ENCODE measurements at regions of chr10 and their contacts with region 1.

Region 1: DNA sequence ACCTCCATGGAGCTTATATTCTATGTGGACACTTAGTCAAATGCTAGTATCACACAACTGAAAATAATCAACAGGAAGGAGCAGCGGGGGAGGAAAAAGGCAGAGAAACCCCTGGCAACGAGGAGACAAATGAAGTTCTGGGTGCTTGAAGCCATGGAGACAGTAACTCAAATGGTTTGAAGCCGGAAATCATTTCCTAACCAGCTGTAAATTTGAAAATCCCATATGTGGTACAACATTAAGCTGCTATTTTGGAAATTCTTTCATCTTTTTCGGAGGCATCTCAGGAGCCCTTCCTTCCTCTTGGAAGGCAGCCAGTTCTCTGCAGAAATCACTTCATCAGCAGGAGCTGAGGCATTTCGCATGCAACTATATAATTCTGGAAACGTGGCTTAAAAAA is 91.4 kb downstream of the PPP1R3C start:
- DNase-seq: no peak
- ATAC-seq: no peak
- H3K4me3 ChIP-seq: no peak overlapping the region
- H3K27ac ChIP-seq: no peak overlapping the region
- H3K4me1 ChIP-seq: no peaks in the 10 kb centered on the region
- H3K27me3 ChIP-seq: no peaks in the 10 kb centered on the region; a peak in 1 of 5 replicates
- CTCF ChIP-seq: no peak
- EP300 ChIP-seq: no peak
- POLR2A ChIP-seq: no peak
- RAD21 ChIP-seq: no peak

Region 2: GRCh38 chr10:91006001-91006751 is 535.3 kb before region 1 on chr10:
- CTCF ChIA-PET with region 1: no interaction called
- POLR2A ChIA-PET with region 1: no interaction called
- in situ Hi-C with region 1: no loop called
- intact Hi-C with region 1: loop called (anchors 10 kb)
- DNase-seq: peak; percentile 41 to 66 (median 45)
- ATAC-seq: peak; percentile 78
- H3K4me3 ChIP-seq: no peak overlapping the region
- H3K27ac ChIP-seq: no peak overlapping the region
- H3K4me1 ChIP-seq: no peaks in the 10 kb centered on the region
- H3K27me3 ChIP-seq: no peaks in the 10 kb centered on the region
- CTCF ChIP-seq: peak; percentile 69 to 85 (median 80)
- EP300 ChIP-seq: no peak
- POLR2A ChIP-seq: no peak
- RAD21 ChIP-seq: peak; percentile 81 to 87

Measured in K562 (cell line).